CD4-positive, alpha-beta T cell (primary cell): ENCODE measurements at regions of chrX and their contacts with region 1.

Region 1: GRCh38 chrX:120228187-120228908 is 22.3 kb upstream of the ZBTB33 start:
- DNase-seq: no peak
- ATAC-seq: no peak
- H3K4me3 ChIP-seq: no peak overlapping the region
- H3K4me3 Mint-ChIP-seq: no peak overlapping the region
- H3K27ac ChIP-seq: no peak overlapping the region
- H3K27ac Mint-ChIP-seq: no peak overlapping the region
- H3K4me1 ChIP-seq: no peaks in the 10 kb centered on the region
- H3K4me1 Mint-ChIP-seq: no peaks in the 10 kb centered on the region
- H3K27me3 ChIP-seq: no peaks in the 10 kb centered on the region
- H3K27me3 Mint-ChIP-seq: no peaks in the 10 kb centered on the region
- CTCF ChIP-seq: no peak

Region 2: DNA sequence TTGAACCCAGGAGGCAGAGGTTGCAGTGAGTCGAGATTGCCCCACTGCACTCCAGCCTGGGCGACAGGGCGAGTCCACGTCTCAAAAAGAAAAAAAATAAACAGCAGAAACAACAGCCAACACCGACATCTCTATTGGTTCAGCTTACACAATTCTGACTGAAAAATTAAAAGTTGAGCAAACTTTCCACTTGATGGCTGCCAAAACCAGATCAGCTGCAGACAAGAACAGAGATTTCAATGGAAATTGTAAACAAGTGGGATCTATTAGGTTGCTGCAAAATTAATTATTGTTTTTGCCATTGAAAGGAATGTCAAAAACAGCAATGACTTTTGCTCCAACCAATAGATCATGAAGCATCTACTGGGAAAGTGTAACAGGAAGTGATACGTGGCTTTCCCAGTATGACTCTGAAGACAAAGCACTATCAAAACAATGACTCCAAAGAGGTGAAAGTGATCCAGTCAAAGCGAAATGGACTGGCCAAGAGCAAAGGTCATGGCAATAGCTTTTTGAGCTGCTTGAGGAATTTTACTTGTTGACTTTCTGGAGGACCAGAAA is 401.9 kb before region 1 on chrX:
- CTCF ChIA-PET with region 1: no interaction called
- POLR2A ChIA-PET with region 1: no interaction called
- intact Hi-C with region 1: no loop called
- DNase-seq: no peak
- ATAC-seq: no peak
- H3K4me3 ChIP-seq: no peak overlapping the region
- H3K4me3 Mint-ChIP-seq: no peak overlapping the region
- H3K27ac ChIP-seq: no peak overlapping the region
- H3K27ac Mint-ChIP-seq: no peak overlapping the region
- H3K4me1 ChIP-seq: peaks cover under 1% of the 10 kb centered on the region
- H3K4me1 Mint-ChIP-seq: peaks cover 15% of the 10 kb centered on the region
- H3K27me3 ChIP-seq: no peaks in the 10 kb centered on the region
- H3K27me3 Mint-ChIP-seq: no peaks in the 10 kb centered on the region
- CTCF ChIP-seq: no peak

Region 3: DNA sequence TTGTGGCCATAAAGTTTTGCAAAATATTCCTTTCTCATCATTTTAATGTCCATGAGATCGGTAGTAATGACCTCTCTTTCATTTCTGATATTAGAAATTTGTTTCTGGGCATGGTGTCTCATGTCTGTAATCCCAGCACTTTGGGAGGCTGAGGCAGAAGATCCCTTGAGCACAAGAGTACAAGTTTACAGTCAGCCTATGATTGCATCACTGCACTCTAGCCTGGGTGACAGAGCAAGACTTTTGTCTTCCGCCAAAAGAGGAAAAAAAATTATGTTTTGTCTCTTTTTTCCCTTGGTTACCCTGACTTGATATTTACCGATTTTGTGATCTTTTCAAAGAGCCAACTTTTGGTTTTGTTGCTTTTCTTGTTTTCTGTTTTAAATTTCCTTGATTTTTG is 274.0 kb before region 1 on chrX:
- CTCF ChIA-PET with region 1: no interaction called
- POLR2A ChIA-PET with region 1: no interaction called
- intact Hi-C with region 1: no loop called
- DNase-seq: no peak
- ATAC-seq: no peak
- H3K4me3 ChIP-seq: no peak overlapping the region
- H3K4me3 Mint-ChIP-seq: no peak overlapping the region
- H3K27ac ChIP-seq: no peak overlapping the region
- H3K27ac Mint-ChIP-seq: no peak overlapping the region
- H3K4me1 ChIP-seq: no peaks in the 10 kb centered on the region
- H3K4me1 Mint-ChIP-seq: peaks cover 9% of the 10 kb centered on the region
- H3K27me3 ChIP-seq: no peaks in the 10 kb centered on the region
- H3K27me3 Mint-ChIP-seq: peaks cover 35% of the 10 kb centered on the region
- CTCF ChIP-seq: no peak

Region 4: DNA sequence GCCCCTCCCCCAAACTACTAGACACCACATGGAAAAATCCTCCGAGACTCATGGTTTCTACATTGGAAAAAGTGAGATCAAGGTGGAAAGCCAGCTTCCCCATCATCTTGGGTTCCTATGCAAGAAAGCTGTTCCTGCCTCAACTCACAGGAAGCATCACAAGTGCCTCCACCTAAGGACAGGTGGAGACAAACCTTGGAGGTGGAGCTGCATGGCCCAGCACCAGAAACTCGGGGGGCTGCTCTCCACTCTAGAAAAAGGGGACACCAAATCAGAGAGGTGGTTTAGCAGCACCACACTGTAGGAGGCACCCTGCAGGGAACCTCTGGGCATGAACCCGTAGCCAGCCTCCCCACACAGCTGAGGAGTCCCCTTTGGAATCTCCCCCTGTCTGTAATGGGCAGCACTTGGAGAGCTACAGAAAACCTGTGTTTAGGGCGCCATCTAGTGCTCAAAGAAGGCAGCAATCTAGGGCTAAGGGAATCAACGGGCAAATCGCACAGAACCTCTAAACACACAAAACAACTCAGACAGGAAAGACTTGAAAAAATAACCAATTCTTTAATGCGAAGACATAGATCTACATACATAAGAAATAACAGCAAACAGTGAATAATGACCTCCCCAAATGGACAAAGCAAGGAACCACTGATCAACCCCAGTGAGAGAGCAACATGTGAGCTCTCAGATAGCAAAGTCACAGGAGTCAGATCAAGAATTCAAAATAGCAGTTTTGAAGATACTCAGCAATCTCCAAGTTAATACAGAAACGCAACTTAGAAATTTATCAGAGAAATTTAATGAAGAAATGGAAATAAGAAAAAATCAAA is 14.7 kb before region 1 on chrX:
- CTCF ChIA-PET with region 1: interaction called, 12 read pairs
- POLR2A ChIA-PET with region 1: no interaction called
- intact Hi-C with region 1: no loop called
- DNase-seq: peak; percentile 19 to 72 (median 37)
- ATAC-seq: peak; percentile 60
- H3K4me3 ChIP-seq: no peak overlapping the region
- H3K4me3 Mint-ChIP-seq: no peak overlapping the region
- H3K27ac ChIP-seq: no peak overlapping the region
- H3K27ac Mint-ChIP-seq: no peak overlapping the region
- H3K4me1 ChIP-seq: no peaks in the 10 kb centered on the region
- H3K4me1 Mint-ChIP-seq: peaks cover 5% of the 10 kb centered on the region
- H3K27me3 ChIP-seq: no peaks in the 10 kb centered on the region
- H3K27me3 Mint-ChIP-seq: no peaks in the 10 kb centered on the region
- CTCF ChIP-seq: peak; percentile 63